Activated CD4-positive, alpha-beta T cell treated with anti-CD3 and anti-CD28 coated beads for 36 hours (primary cell): ENCODE measurements at regions of chr14 and their contacts with region 1.

Region 1: DNA sequence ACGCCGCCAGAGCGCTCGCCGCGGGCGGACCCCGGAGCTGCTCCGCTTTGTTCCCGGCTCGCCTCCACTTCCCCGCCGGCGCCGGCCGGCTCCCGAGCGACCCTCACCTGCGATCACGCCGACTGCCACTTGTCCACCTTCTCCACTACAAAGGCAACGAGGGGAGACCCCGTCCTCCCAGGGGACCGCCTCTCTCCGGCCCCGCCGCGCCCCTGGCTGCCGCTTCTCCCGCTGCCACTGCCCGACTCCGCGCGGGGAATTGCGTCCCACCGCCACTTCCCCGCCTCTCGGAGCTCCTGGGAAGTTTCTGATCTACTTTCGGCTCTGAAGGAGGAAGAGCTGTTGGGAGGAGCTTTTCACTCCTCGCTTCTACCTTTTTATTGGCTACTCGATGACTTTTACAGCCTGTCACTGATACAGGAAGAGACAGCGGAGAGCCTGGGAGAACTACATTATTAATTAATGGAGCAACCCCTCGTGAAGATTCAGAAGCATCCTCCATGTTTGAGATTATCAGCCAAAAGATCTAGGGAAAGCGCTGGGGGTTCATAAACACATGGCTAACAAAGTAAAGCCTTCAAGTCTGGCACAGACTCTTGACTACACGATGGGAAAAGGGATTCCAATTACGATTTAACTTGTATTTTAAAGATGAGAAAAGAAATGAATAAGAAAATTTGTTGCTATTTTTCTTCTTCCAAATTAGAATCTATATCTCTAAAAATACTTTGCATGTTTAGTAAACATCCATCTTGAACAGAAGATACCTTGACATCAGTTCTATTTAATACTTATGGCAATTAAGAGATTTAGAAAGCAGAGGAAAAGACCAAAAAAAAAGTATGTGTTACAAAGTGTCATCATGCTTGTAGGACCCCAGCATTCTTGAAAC is at the start of gene BAZ1A:
- DNase-seq: peak; percentile 50
- ATAC-seq: peak; percentile 9
- H3K4me3 Mint-ChIP-seq: peak within 1 kb of the TSS; percentile 99
- H3K27ac Mint-ChIP-seq: peak within 1 kb of the TSS; percentile 98
- H3K4me1 Mint-ChIP-seq: peaks cover 29% of the 10 kb centered on the region
- H3K27me3 Mint-ChIP-seq: no peaks in the 10 kb centered on the region
- total RNA-seq, gene BAZ1A: 53.9 to 75.2 TPM

Region 2: DNA sequence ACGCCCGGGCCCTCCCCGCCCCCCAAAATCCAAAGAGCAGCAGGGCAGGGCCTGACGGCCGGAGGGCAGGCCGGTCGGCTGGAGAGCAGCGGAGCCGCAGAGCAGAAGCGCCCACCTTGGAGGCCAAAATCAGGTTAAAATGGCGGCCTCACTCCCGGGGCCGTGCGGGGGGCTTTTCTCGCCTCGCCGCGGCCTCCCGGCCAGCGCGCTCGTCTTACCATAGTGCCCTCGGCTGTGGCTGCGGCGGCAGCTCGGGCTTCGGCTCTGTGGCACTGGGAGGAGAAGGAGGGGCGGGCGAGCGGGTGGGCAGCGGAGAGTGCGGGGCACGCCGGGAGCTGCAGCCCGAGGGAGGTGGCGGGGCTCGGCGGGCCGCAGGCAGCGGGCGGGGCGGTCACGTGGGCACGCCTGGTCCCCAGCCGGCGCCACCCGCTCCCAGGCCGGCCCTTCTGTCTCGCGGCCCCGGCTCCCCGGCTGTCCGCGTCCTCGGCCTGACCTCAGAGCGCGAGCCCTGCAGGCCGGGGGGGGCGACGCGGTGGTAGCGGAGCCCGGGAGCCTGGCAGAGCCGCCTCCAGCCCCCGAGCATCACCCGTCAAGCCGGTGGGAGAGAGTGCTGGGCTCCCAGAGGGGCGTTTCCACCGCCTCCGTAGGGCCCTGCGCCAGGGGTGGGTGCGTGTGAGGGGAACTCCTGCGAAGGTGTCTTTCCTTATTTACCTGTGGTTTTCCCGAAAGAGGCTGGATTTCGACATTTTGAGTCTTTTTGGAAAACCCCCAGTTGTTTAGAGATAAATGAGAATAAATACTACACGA is 160.8 kb before region 1 on chr14 and contains the start of gene CFL2:
- CTCF ChIA-PET with region 1: no interaction called
- POLR2A ChIA-PET with region 1: no interaction called
- intact Hi-C with region 1: loop called in 1 of 2 experiments (anchors 1 kb)
- DNase-seq: peak; percentile 79
- ATAC-seq: peak; percentile 84
- H3K4me3 Mint-ChIP-seq: peak within 1 kb of the TSS; percentile 91
- H3K27ac Mint-ChIP-seq: peak within 1 kb of the TSS; percentile 91
- H3K4me1 Mint-ChIP-seq: peaks cover 21% of the 10 kb centered on the region
- H3K27me3 Mint-ChIP-seq: no peaks in the 10 kb centered on the region
- total RNA-seq, gene CFL2: 4.5 to 6.8 TPM

Region 3: GRCh38 chr14:34843011-34843554 is 32.2 kb before region 1 on chr14:
- CTCF ChIA-PET with region 1: interaction called, 3 read pairs
- POLR2A ChIA-PET with region 1: interaction called, 7 read pairs
- intact Hi-C with region 1: loop called (anchors 1 kb)
- DNase-seq: peak; percentile 54
- ATAC-seq: peak; percentile 98
- H3K4me3 Mint-ChIP-seq: no peak overlapping the region
- H3K27ac Mint-ChIP-seq: peak overlapping the region; percentile 74
- H3K4me1 Mint-ChIP-seq: peaks cover 25% of the 10 kb centered on the region
- H3K27me3 Mint-ChIP-seq: no peaks in the 10 kb centered on the region

Region 4: DNA sequence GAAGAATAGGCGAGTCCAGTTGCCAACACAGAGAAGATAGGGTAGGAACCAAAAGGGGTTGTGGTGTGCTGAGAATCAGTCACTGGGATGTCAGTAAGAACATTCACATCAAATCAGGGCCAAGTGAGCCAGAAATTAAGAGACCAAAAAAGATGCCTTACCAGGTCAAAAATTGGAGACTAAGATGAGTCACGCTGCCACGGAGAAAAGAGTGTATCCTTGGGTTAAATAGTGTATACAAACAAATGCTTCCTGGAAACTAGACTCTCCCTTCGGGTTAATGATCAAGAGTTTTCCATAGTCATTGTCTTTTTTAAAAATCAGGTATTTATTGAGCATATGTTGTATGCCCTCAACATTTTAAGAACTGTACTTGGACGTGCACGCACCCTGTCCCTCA is 45.1 kb after region 1 on chr14:
- CTCF ChIA-PET with region 1: no interaction called
- POLR2A ChIA-PET with region 1: no interaction called
- intact Hi-C with region 1: no loop called
- DNase-seq: no peak
- ATAC-seq: no peak
- H3K4me3 Mint-ChIP-seq: no peak overlapping the region
- H3K27ac Mint-ChIP-seq: no peak overlapping the region
- H3K4me1 Mint-ChIP-seq: no peaks in the 10 kb centered on the region
- H3K27me3 Mint-ChIP-seq: no peaks in the 10 kb centered on the region

Region 5: GRCh38 chr14:35046048-35046741 is 170.9 kb after region 1 on chr14 and contains the start of gene FAM177A1:
- CTCF ChIA-PET with region 1: interaction called, 4 read pairs
- POLR2A ChIA-PET with region 1: interaction called, 6 read pairs
- intact Hi-C with region 1: loop called (anchors 1 kb)
- DNase-seq: peak; percentile 100
- ATAC-seq: peak; percentile 94
- H3K4me3 Mint-ChIP-seq: peak within 1 kb of the TSS; percentile 95
- H3K27ac Mint-ChIP-seq: peak within 1 kb of the TSS; percentile 99
- H3K4me1 Mint-ChIP-seq: peaks cover 23% of the 10 kb centered on the region
- H3K27me3 Mint-ChIP-seq: no peaks in the 10 kb centered on the region
- total RNA-seq, gene FAM177A1: 35.4 to 37.2 TPM